ENCODE measurements at regions of chr2 and their contacts with region 1.

Region 1: GRCh38 chr2:151840216-151841046 is 12.2 kb upstream of the ARL5A start:
- DNase-seq: no peak

Region 2: DNA sequence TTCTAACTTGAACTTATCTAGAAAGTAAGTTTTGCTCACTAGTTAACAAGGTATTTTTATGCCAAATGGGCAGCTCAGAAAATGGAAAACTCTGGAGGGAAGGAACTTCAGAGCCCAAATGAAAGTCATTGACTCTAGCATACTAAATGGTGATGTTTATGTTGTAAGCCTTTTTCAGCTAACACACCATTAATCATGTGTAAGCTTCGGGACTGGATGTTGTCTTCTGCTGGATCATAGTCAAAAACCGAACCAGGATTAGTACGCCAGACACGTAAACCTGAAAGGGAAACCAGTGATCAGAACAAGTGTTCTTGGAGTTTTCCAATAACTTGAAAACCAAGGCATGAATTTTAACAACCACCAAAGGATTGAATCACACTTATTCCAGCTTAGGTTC is 348.9 kb before region 1 on chr2:
- intact Hi-C with region 1: no loop called
- DNase-seq: no peak

Region 3: DNA sequence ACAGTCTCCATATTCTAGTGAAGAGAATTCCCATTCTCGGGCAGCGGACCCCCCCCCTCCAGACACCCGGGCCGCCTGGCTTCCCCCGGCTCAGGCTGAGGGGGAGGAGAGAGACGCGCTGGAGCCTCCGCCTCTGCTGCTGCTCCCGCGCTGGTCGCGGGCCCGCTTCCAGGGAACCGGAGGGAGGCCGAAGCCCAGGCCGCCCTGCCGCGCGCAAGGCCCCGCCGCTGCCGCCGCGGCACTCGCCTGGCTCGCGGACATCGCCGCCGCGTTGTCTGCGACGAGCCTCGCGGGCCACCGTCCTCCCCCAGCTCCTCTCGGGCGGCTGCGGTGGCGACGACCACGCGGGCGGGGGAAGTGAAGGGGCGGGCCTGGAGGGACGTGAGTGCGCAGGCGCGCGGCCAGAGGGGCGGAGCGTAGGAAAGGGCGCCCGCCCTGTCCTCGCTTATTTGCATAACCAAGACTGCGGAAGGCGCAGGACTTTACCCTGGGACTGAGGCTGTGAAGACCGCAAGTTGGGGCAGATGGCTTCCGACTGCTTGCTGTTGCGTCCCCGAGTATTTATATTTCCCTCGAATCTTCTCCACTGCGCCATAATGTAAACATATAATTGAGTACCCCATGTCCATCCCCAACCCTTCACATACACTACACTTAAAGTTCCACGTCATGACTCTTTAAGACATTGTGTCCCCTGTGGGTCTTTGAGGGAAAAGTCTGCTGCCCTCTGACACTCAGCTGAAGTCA is 12.1 kb before region 1 on chr2 and contains the start of gene ARL5A:
- intact Hi-C with region 1: loop called (anchors 2 kb)
- DNase-seq: peak; percentile 99
- total RNA-seq, gene ARL5A: 60.9 TPM

Region 4: DNA sequence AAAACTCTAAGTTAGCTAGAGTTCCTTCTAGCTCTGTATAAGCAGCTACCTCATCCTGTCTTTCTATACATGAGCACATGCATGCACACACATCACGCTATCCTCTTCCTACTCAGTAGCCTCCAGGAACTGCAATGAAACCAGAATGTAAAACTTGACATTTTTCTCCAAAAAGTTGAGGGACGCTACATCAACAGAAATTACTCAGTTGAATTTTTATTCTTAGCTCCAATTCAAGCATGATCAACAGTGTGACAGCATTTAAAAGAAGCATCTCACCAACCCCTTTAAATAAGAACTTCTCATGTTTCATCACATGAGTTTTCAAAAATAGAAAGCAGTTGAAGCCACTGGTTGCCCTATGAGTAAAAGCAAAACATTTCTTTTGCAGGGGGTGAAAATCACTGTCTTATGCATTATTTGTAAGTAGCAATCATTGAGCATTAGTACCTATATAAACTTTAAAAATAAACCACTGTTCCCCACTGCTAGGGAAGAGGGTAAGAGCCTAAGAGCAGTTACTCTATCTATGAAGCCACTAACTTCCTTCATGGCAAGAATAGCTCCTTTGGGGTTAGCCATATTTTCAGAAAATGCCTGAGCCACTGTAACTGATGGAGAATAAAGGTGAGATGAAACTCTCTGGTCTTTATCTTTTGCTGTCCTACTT is 65.7 kb after region 1 on chr2:
- intact Hi-C with region 1: loop called (anchors 5 kb)
- DNase-seq: no peak

Measured in cardiac septum (tissue), 1 donor.